Aorta (tissue), 5 donors: ENCODE measurements at regions of chr15 and their contacts with region 1.

Region 1: GRCh38 chr15:95259513-95259912 is 1028.2 kb downstream of the MCTP2 start:
- DNase-seq: peak; percentile 71 to 78
- ATAC-seq: peak; percentile 92
- H3K4me3 ChIP-seq: no peak overlapping the region
- H3K27ac ChIP-seq: no peak overlapping the region
- H3K4me1 ChIP-seq: peaks cover 0 to 7% of the 10 kb centered on the region in 2 donors
- H3K27me3 ChIP-seq: no peaks in the 10 kb centered on the region

Region 2: GRCh38 chr15:94670438-94671034 is 589.0 kb before region 1 on chr15:
- intact Hi-C with region 1: loop called in 1 of 2 experiments (anchors 10 kb)
- DNase-seq: no peak
- ATAC-seq: no peak
- H3K4me3 ChIP-seq: no peak overlapping the region
- H3K27ac ChIP-seq: no peak overlapping the region
- H3K4me1 ChIP-seq: no peaks in the 10 kb centered on the region
- H3K27me3 ChIP-seq: peaks cover 0 to 2% of the 10 kb centered on the region in 2 donors

Region 3: DNA sequence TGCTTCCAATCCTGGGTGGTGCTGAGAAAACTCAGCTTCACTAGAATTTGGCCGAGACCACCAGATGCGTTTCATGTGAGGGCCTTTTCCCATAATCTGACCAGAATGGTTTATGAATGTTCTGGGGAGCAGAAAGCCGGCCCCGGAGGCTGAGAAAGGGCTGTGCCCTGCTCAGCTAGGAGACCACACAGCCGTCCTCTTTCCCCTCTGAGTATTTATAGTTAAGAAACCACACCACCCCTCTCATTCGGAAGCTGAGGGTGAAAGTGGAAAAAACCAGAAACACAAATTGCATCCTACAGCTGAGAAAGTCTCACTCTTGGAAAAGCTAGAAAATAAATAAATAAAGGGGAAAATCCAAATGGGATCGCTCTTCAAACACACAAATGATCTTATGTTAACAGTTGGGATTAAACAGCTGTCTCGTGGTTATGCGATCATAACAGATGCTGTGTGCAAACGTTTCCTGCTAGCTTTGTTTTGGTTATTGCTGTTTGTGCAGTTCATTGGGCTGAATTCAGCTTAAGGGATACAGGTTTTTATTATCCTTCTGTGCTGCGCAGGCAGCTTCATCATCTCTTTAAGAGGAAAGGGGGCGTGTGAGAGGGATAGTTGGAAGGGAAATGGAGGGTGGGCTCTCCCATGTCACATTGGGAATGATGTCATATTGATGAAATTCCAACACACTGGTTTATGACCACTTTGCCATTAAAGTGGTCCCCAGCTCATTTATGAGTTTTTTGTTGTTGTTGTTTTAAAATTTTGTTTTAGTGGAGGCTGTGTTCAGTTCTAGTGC is 44.8 kb after region 1 on chr15:
- intact Hi-C with region 1: no loop called
- DNase-seq: no peak
- ATAC-seq: peak; percentile 78
- H3K4me3 ChIP-seq: no peak overlapping the region
- H3K27ac ChIP-seq: no peak overlapping the region
- H3K4me1 ChIP-seq: no peaks in the 10 kb centered on the region
- H3K27me3 ChIP-seq: no peaks in the 10 kb centered on the region

Region 4: GRCh38 chr15:95409626-95410310 is 150.3 kb after region 1 on chr15:
- intact Hi-C with region 1: loop called in 1 of 2 experiments (anchors 10 kb)
- DNase-seq: no peak
- ATAC-seq: no peak
- H3K4me3 ChIP-seq: no peak overlapping the region
- H3K27ac ChIP-seq: no peak overlapping the region
- H3K4me1 ChIP-seq: peaks cover 6 to 8% of the 10 kb centered on the region in 2 donors
- H3K27me3 ChIP-seq: no peaks in the 10 kb centered on the region

Region 5: DNA sequence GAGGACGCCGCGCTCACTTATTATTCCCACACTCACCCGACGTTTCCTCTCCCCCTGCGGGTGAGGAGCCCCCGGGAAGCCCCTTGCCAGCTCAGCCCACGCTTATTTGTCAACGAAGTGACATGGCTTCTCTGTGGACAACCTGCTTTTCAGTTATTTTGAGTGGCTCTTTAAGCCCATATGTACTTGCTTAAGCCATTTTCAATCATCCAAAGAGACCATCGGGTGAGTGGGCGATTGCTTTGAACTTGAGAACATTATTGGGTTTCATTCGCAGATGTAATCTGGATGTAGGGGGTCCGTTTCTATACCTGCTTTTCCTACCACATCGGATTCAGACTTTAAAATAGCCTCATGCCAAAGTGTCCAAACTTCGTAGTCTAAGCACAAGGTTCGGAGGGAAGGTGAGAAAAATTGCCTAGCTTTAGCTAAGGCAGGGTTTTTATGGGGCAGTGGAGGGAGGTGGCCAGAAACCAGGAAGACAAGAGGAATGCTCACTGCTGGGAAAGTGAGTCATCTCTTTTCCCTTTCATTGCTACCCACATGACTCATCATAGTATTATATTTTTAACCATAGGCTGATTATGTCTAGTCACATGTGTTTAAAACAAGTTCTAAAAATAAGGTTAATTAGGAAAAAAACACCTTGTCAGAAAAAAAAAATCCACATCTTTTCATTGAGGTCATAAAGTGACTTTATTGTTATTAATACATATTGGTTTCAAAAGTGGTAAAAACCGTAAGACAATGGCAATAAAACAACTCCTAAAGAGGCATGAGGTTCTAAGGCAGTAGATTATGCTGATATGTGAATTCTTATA is 297.9 kb after region 1 on chr15:
- intact Hi-C with region 1: loop called in 1 of 2 experiments (anchors 5 kb)
- DNase-seq: peak in 1 of 2 donors; percentile 55
- ATAC-seq: peak; percentile 86
- H3K4me3 ChIP-seq: no peak overlapping the region
- H3K27ac ChIP-seq: peak overlapping the region; percentile 51 to 84
- H3K4me1 ChIP-seq: peaks cover 0 to 2% of the 10 kb centered on the region in 2 donors
- H3K27me3 ChIP-seq: no peaks in the 10 kb centered on the region

Region 6: DNA sequence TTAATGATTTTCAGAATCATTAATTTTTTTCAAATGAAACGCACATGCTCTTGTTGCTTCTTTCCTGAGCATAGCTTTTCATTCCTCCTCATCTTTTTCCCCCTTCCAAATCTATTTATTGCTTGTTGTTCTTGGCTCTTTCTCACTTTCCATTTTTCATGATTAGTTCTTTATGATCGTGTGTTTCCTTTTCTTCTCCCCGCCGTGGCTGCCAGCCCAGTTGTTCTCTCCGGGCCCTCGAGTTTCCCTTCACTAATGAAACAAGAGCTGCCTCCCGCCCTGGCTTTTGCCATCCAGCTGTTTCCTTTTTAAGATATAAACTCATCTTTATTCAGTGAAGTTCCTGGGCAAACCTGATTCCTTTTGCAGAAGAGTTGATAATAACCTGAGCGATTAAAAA is 900.8 kb after region 1 on chr15:
- intact Hi-C with region 1: loop called (anchors 10 kb)
- DNase-seq: peak; percentile 84
- ATAC-seq: peak; percentile 70
- H3K4me3 ChIP-seq: no peak overlapping the region
- H3K27ac ChIP-seq: no peak overlapping the region
- H3K4me1 ChIP-seq: peaks cover 0 to 3% of the 10 kb centered on the region in 2 donors
- H3K27me3 ChIP-seq: no peaks in the 10 kb centered on the region

Region 7: GRCh38 chr15:96345560-96346399 is 1086.3 kb after region 1 on chr15:
- intact Hi-C with region 1: loop called (anchors 5 kb)
- DNase-seq: peak; percentile 80 to 89
- ATAC-seq: peak; percentile 83
- H3K4me3 ChIP-seq: peak overlapping the region; percentile 42 to 51
- H3K27ac ChIP-seq: peak overlapping the region in 1 of 2 donors; percentile 70
- H3K4me1 ChIP-seq: no peaks in the 10 kb centered on the region
- H3K27me3 ChIP-seq: no peaks in the 10 kb centered on the region